Posterior cingulate gyrus (tissue), 11 donors: ENCODE measurements at regions of chr16 and their contacts with region 1.

Region 1: GRCh38 chr16:50368410-50369132 is at the start of gene BRD7:
- DNase-seq: peak in 9 of 10 donors; percentile 34 to 93 (median 59)

Region 2: DNA sequence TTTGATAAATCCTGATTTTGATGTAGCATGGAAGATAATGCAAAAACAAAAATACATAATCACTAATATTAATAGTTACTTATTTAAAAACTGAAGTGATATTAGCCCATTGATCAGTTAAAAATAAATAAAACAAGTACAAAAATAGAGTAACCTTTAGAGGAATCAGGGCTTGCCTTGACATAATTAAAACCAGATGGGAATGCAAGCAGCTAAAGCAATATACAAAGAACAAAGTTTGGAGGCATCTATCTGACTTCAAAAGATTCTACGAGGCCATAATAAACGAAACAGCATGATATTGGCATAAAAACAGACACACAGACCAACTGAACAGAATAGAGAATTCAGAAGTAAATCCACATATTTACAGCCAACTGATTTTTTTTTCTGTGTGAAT is 317.8 kb before region 1 on chr16:
- intact Hi-C with region 1: no loop called
- DNase-seq: no peak

Region 3: GRCh38 chr16:50152807-50153452 is 215.6 kb before region 1 on chr16 and contains the start of gene TENT4B:
- intact Hi-C with region 1: loop called (anchors 5 kb)
- DNase-seq: peak; percentile 77 to 98 (median 84)

Region 4: GRCh38 chr16:50497592-50497991 is 129.0 kb after region 1 on chr16:
- intact Hi-C with region 1: no loop called
- DNase-seq: no peak

Region 5: GRCh38 chr16:50539822-50540710 is 171.5 kb after region 1 on chr16:
- intact Hi-C with region 1: loop called (anchors 1 kb)
- DNase-seq: peak in 7 of 10 donors; percentile 34 to 94 (median 52)

Region 6: GRCh38 chr16:50747207-50747956 is 378.8 kb after region 1 on chr16:
- intact Hi-C with region 1: loop called (anchors 5 kb)
- DNase-seq: no peak